ENCODE measurements at regions of chr18 and their contacts with region 1.

Region 1: GRCh38 chr18:76803814-76804213 is 18.5 kb upstream of the ZNF236 start:
- DNase-seq: peak; percentile 82
- H3K4me3 Mint-ChIP-seq: no peak overlapping the region
- H3K27ac Mint-ChIP-seq: no peak overlapping the region
- H3K4me1 Mint-ChIP-seq: peaks cover 12% of the 10 kb centered on the region
- H3K27me3 Mint-ChIP-seq: peaks cover 30% of the 10 kb centered on the region

Region 2: GRCh38 chr18:76721207-76721996 is 82.4 kb before region 1 on chr18:
- CTCF ChIA-PET with region 1: interaction called, 10 read pairs
- DNase-seq: peak; percentile 89
- H3K4me3 Mint-ChIP-seq: peak overlapping the region; percentile 60
- H3K27ac Mint-ChIP-seq: peak overlapping the region; percentile 93
- H3K4me1 Mint-ChIP-seq: peaks cover 60% of the 10 kb centered on the region
- H3K27me3 Mint-ChIP-seq: peaks cover 31% of the 10 kb centered on the region

Region 3: DNA sequence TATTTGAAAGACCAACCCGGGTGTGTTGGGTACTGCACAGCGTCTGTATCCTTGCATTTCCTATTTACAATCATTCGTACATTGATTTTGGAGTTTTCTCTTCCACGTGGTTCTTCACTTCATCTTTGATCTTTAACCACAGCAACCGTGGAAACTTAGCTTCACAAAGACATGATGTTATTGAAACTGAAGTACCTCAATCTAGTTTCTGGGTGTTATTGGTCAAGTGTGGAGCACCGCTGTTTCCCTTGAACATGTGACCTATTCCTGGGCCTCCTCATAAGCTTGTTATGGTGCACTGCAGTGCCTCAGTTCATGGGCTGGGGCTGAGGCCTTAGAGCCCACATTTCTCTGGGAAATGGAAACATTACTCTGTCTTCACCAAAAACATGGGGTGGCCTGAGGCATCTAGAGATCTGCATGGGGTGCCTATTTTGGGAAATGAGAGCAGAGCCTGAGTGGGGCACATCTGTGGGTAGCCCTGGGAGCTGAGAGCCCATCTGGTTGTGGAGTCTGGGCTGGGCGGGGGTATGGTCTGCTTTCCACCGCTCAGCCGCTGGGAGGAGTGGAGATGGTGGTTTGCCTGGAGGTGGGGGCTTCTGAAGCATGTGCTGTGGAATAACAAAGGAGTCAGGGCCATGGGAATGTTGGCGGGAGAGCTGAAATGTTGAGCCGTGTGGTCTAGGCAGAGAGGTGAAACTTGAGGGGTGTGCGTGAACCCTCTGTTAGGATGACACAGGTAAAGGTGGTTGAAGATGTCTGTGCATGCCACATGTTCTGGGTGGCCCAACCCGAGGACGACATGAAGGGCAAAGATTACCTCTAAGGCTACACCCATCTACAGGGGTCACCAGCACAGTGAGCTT is 55.9 kb after region 1 on chr18:
- CTCF ChIA-PET with region 1: interaction called, 14 read pairs
- DNase-seq: peak; percentile 60
- H3K4me3 Mint-ChIP-seq: peak overlapping the region; percentile 1
- H3K27ac Mint-ChIP-seq: peak overlapping the region; percentile 91
- H3K4me1 Mint-ChIP-seq: peaks cover 29% of the 10 kb centered on the region
- H3K27me3 Mint-ChIP-seq: no peaks in the 10 kb centered on the region

Region 4: GRCh38 chr18:76922107-76922506 is 118.3 kb after region 1 on chr18:
- CTCF ChIA-PET with region 1: interaction called, 14 read pairs
- DNase-seq: peak; percentile 74
- H3K4me3 Mint-ChIP-seq: no peak overlapping the region
- H3K27ac Mint-ChIP-seq: peak overlapping the region; percentile 15
- H3K4me1 Mint-ChIP-seq: peaks cover 15% of the 10 kb centered on the region
- H3K27me3 Mint-ChIP-seq: no peaks in the 10 kb centered on the region

Region 5: GRCh38 chr18:77650799-77651385 is 847.1 kb after region 1 on chr18:
- CTCF ChIA-PET with region 1: interaction called, 13 read pairs
- DNase-seq: peak; percentile 67
- H3K4me3 Mint-ChIP-seq: no peak overlapping the region
- H3K27ac Mint-ChIP-seq: no peak overlapping the region
- H3K4me1 Mint-ChIP-seq: no peaks in the 10 kb centered on the region
- H3K27me3 Mint-ChIP-seq: peaks cover 10% of the 10 kb centered on the region

Measured in activated naive CD4-positive, alpha-beta T cell treated with anti-CD3 and anti-CD28 coated beads, Interleukin-2, amount 10 ng/mL, durations not matched to agents 7 days and 5 days (primary cell).